ENCODE measurements at regions of chr12 and their contacts with region 1.

Region 1: DNA sequence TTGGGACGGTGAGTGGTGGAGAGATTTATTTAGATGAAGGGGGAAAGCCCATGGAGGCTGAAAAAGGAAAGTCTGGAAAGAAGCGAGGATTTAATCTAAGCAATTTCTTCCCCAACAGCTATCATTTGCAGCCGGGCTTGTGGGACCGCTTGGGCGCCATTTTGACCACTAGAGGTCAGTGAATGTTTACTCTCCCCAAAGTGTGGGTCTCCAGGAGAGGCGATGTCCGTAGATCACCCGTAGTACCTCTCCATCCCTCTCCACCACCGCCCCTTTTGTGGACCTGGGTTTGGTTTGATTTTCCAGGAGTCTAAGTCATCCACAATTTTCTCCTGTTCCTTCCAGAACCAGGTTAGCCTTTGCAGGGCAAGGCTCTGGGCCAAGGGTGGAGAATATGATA is 91.2 kb upstream of the PARP11 start:
- DNase-seq: no peak
- ATAC-seq: no peak
- H3K4me3 Mint-ChIP-seq: no peak overlapping the region
- H3K27ac Mint-ChIP-seq: no peak overlapping the region
- H3K4me1 Mint-ChIP-seq: peaks cover 20% of the 10 kb centered on the region
- H3K27me3 Mint-ChIP-seq: peaks cover 2% of the 10 kb centered on the region

Region 2: GRCh38 chr12:3896801-3897331 is 67.6 kb before region 1 on chr12:
- CTCF ChIA-PET with region 1: interaction called, 37 read pairs
- POLR2A ChIA-PET with region 1: interaction called, 6 read pairs
- DNase-seq: no peak
- ATAC-seq: peak; percentile 34
- H3K4me3 Mint-ChIP-seq: peak overlapping the region; percentile 58
- H3K27ac Mint-ChIP-seq: peak overlapping the region; percentile 96
- H3K4me1 Mint-ChIP-seq: peaks cover 32% of the 10 kb centered on the region
- H3K27me3 Mint-ChIP-seq: no peaks in the 10 kb centered on the region

Region 3: GRCh38 chr12:3931746-3932145 is 32.7 kb before region 1 on chr12:
- CTCF ChIA-PET with region 1: interaction called, 16 read pairs
- POLR2A ChIA-PET with region 1: interaction called, 3 read pairs
- DNase-seq: no peak
- ATAC-seq: no peak
- H3K4me3 Mint-ChIP-seq: no peak overlapping the region
- H3K27ac Mint-ChIP-seq: no peak overlapping the region
- H3K4me1 Mint-ChIP-seq: peaks cover 53% of the 10 kb centered on the region
- H3K27me3 Mint-ChIP-seq: peaks cover 4% of the 10 kb centered on the region

Region 4: DNA sequence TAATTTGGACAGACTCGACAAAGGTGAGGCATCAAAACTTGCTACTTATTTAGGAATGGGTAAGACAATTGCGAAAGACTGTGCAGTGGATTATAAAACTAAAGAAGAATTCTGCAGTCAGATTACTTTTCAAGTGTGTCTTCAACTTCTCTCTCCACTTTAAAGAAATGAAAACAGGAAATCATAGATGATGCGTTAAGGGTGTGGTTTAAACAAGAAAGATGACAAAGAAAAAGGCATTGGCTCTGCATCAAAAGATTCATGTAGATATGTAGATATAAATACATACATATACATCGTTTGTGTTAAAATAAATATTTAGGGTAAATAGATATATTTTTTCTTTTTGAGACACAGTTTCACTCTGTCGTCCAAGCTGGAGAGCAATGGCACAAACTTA is 16.7 kb before region 1 on chr12:
- CTCF ChIA-PET with region 1: interaction called, 23 read pairs
- POLR2A ChIA-PET with region 1: interaction called, 3 read pairs
- DNase-seq: no peak
- ATAC-seq: no peak
- H3K4me3 Mint-ChIP-seq: peak overlapping the region; percentile 2
- H3K27ac Mint-ChIP-seq: peak overlapping the region; percentile 75
- H3K4me1 Mint-ChIP-seq: peaks cover 45% of the 10 kb centered on the region
- H3K27me3 Mint-ChIP-seq: peaks cover 9% of the 10 kb centered on the region

Region 5: GRCh38 chr12:3988519-3989448 is 24.3 kb after region 1 on chr12:
- CTCF ChIA-PET with region 1: interaction called, 71 read pairs
- POLR2A ChIA-PET with region 1: interaction called, 5 read pairs
- DNase-seq: peak; percentile 48
- ATAC-seq: peak; percentile 82
- H3K4me3 Mint-ChIP-seq: peak overlapping the region; percentile 29
- H3K27ac Mint-ChIP-seq: peak overlapping the region; percentile 86
- H3K4me1 Mint-ChIP-seq: peaks cover 25% of the 10 kb centered on the region
- H3K27me3 Mint-ChIP-seq: peaks cover 7% of the 10 kb centered on the region